Sigmoid colon (tissue), 7 donors: ENCODE measurements at regions of chr7 and their contacts with region 1.

Region 1: GRCh38 chr7:129091484-129092002 is 36.6 kb upstream of the TNPO3 start:
- DNase-seq: peak; percentile 84
- H3K4me3 ChIP-seq: no peak overlapping the region
- H3K27ac ChIP-seq: no peak overlapping the region
- H3K4me1 ChIP-seq: peaks cover 0 to 4% (median 0%) of the 10 kb centered on the region in 4 donors
- H3K27me3 ChIP-seq: no peaks in the 10 kb centered on the region
- CTCF ChIP-seq: peak; percentile 65 to 96 (median 90)
- EP300 ChIP-seq: no peak
- POLR2A ChIP-seq: no peak

Region 2: GRCh38 chr7:128906766-128907559 is 184.6 kb before region 1 on chr7:
- intact Hi-C with region 1: loop called (anchors 2 kb)
- DNase-seq: peak; percentile 52
- H3K4me3 ChIP-seq: no peak overlapping the region
- H3K27ac ChIP-seq: no peak overlapping the region
- H3K4me1 ChIP-seq: peaks cover 0 to 16% (median 15%) of the 10 kb centered on the region in 4 donors
- H3K27me3 ChIP-seq: peaks cover 9 to 56% (median 15%) of the 10 kb centered on the region in 3 donors
- CTCF ChIP-seq: no peak
- EP300 ChIP-seq: no peak
- POLR2A ChIP-seq: no peak

Region 3: GRCh38 chr7:129024125-129024524 is 67.4 kb before region 1 on chr7:
- intact Hi-C with region 1: loop called (anchors 10 kb)
- DNase-seq: no peak
- H3K4me3 ChIP-seq: no peak overlapping the region
- H3K27ac ChIP-seq: no peak overlapping the region
- H3K4me1 ChIP-seq: peaks cover 0 to 4% (median 0%) of the 10 kb centered on the region in 4 donors
- H3K27me3 ChIP-seq: no peaks in the 10 kb centered on the region
- CTCF ChIP-seq: no peak
- EP300 ChIP-seq: no peak
- POLR2A ChIP-seq: no peak

Region 4: DNA sequence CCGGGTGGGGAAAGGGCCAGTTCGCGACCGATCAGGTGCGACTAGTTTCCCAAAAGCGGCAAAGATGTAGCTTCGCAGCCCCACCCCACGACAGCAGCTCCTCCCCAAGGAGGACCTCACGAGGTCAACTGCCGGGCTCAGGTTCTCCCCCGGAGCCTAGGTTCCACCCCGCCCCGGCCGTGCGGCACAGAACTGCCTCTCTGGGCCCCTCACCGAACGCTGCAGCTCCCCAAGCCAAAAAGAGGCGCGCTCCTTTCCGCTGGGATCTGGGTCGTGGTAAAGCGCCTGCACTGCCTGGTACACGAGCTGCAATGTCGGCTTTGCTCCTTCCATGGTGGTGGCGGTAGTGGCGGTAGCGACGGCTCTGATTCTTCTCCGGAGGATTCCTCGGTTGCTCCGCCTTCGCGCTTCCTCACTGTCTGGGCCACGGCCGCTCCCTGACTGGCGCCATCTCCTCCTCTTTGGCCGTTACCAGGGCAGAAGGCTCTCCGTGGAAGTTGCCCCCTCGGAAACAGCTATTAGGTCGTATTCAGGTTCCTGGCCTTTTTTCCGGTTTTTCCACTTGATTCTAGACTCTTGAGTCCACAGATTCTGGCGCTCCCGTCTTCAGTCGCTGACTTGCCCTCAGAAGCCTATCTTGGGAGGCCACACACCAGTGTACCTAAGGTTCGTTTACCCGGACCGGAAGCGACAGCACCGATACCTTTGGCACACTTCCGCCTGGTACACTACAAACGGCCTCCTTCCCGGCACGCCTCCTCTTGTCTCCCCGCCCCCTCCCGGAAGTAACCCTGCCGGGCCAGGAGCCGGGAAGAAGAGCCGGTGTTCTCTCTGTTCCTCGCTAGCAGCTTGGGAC is 36.9 kb before region 1 on chr7 and contains the start of gene TNPO3:
- intact Hi-C with region 1: loop called (anchors 5 kb)
- DNase-seq: peak; percentile 97
- H3K4me3 ChIP-seq: peak within 1 kb of the TSS; percentile 80 to 87 (median 85)
- H3K27ac ChIP-seq: peak within 1 kb of the TSS; percentile 91 to 97 (median 92)
- H3K4me1 ChIP-seq: peaks cover 0 to 28% (median 24%) of the 10 kb centered on the region in 4 donors
- H3K27me3 ChIP-seq: no peaks in the 10 kb centered on the region
- CTCF ChIP-seq: no peak
- EP300 ChIP-seq: no peak
- POLR2A ChIP-seq: peak; percentile 61 to 69
- total RNA-seq, gene TNPO3: 35.2 to 40.5 (median 35.9) TPM